ENCODE measurements at regions of chr1 and their contacts with region 1.

Region 1: GRCh38 chr1:113140588-113141446 is 67.8 kb downstream of the LRIG2 start:
- DNase-seq: peak; percentile 73 to 81 (median 74)
- ATAC-seq: peak; percentile 90
- H3K4me3 ChIP-seq: no peak overlapping the region
- H3K27ac ChIP-seq: peak overlapping the region in 3 of 4 donors; percentile 20 to 59 (median 53)
- H3K4me1 ChIP-seq: peaks cover 22% of the 10 kb centered on the region
- H3K27me3 ChIP-seq: no peaks in the 10 kb centered on the region
- CTCF ChIP-seq: peak; percentile 68 to 93 (median 88)
- POLR2A ChIP-seq: no peak

Region 2: DNA sequence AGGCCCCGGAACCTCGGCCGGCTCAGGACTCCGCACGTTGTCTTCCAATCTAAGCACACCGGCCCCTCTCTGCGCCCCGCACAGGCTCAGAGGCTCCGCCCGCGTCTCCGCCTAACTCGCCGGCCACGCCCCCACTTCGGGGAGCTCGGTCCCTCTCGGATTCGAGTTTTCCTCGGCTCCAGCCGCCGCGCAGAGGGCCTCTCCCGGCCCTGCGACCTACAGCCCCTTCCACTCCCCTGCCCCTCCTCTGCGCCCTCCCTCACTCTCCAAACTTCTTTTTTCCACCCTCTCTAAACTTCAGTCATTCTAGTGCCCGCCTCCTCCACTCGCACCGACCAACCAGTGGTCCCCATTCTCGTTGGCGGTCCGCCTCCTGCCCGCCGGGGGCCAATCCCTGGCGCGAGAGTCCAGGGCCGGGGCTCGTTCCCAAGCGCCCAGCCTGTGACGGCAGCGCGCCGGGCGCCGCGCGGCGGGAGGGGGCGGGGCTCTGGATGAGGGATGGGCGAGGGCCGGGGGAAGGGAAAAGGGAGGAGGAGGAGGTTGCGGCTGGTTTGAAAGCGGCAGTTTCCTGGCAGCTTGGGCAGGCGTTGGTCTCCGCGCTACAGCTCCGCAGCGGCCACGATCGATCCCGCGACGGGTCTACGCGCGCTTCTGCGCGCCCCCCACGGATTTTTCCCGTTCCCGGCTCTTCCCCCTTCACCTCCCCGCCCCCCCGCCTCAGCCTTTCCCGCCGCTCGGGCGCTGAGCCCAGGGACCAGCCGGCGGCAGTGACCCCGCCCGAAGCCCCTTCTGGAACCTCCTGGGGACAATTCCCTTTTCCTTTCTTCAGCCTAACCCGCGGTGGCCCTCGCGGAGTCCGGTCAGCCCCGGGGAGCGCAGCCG is 249.4 kb after region 1 on chr1 and contains the start of gene MAGI3:
- intact Hi-C with region 1: loop called (anchors 10 kb)
- DNase-seq: peak; percentile 97 to 98 (median 98)
- ATAC-seq: peak; percentile 92
- H3K4me3 ChIP-seq: peak within 1 kb of the TSS; percentile 93 to 95
- H3K27ac ChIP-seq: peak within 1 kb of the TSS; percentile 88 to 98 (median 95)
- H3K4me1 ChIP-seq: peaks cover 23% of the 10 kb centered on the region
- H3K27me3 ChIP-seq: no peaks in the 10 kb centered on the region
- CTCF ChIP-seq: peak in 1 of 7 experiments; percentile 17
- POLR2A ChIP-seq: peak; percentile 93 to 98 (median 98)
- total RNA-seq, gene MAGI3: 38.4 to 75.8 TPM

Region 3: DNA sequence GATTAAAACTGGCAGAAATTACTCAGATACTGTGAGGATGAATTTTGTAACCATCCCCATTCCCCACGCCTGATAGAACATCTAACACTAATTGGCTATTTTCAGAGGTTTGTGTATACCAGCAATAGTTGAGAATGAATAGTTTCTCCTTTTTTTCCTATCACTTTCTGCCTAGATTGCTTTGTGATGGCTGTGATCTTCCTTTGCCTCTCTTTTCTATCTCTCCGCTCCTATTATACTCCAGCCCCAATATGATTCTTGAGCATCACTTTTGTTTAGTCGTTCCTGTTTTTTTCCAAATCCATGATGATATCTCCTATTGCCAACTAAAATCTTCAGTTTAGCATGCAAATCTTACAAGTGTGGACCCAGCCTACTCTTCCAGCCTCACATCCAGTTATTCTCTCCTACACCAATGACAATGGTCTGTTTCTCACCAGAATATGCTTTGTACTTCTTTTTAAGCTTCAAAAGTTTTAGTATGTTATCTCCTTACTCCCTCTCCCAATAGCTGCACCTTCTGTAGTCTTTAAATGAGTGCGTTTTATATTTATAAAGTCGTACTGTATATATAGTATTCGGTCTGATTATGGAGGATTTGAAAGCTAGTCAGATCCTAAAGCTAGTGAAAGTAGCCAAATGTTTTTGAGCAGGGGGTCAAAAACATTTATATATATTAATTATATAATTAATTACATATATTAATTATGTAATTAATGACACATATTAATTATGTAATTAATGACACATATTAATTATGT is 274.7 kb after region 1 on chr1:
- intact Hi-C with region 1: no loop called
- DNase-seq: no peak
- ATAC-seq: peak; percentile 59
- H3K4me3 ChIP-seq: no peak overlapping the region
- H3K27ac ChIP-seq: no peak overlapping the region
- H3K4me1 ChIP-seq: peaks cover 22% of the 10 kb centered on the region
- H3K27me3 ChIP-seq: no peaks in the 10 kb centered on the region
- CTCF ChIP-seq: no peak
- POLR2A ChIP-seq: no peak

Region 4: DNA sequence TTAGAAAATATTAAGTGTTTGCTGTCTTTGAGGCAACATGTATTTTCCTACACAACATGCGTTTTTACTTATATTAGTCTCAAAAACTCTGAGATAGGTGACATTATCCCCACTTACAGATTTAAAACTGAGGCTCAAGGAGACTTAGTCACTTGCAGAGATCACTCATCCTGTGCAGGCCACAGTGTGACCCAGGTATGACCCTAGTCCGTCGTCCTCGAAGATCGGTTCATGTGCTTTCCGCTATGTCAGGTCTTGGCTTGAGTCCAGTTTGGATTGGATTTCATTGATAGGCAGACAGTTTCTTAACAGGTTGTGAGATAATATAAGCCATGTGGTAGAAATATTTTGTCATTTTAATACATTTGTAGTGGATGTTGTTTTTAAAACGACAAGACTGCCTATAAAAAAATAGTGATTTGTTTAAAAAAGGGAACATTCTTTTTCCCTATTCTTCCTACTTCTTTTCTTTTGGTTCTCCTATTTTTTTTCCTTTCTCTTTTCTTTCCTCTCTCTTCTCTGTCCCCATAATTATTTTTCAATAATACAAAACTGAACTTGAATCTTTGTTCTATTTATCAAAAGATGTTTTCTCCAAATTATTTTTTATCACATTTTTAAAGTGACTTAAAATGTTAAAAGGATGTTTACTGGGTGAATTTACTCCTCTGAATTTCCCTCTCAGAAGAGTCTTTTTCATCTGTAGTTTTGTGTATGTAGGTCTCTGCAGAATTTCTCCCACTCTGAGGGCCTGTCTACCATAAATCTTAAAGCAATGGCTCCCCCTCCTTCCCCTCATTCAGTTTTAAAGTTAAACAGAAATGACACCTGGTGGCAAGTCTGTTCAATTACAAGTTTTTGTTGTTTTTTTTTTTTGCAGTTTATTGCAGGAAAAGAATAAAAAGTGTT is 536.7 kb after region 1 on chr1:
- intact Hi-C with region 1: loop called (anchors 5 kb)
- DNase-seq: peak; percentile 30 to 52 (median 42)
- ATAC-seq: no peak
- H3K4me3 ChIP-seq: no peak overlapping the region
- H3K27ac ChIP-seq: peak overlapping the region in 1 of 4 donors; percentile 6
- H3K4me1 ChIP-seq: peaks cover 6% of the 10 kb centered on the region
- H3K27me3 ChIP-seq: no peaks in the 10 kb centered on the region
- CTCF ChIP-seq: peak; percentile 24 to 66 (median 54)
- POLR2A ChIP-seq: no peak